Ascending aorta (tissue), 2 donors: ENCODE measurements at regions of chr6 and their contacts with region 1.

Region 1: GRCh38 chr6:125301435-125302391 is at the start of gene HDDC2:
- DNase-seq: peak in 1 of 2 donors; percentile 84
- H3K4me3 ChIP-seq: peak within 1 kb of the TSS; percentile 76 to 79
- H3K27ac ChIP-seq: peak within 1 kb of the TSS; percentile 94 to 96
- H3K4me1 ChIP-seq: peaks cover 3 to 5% of the 10 kb centered on the region in 2 donors
- H3K27me3 ChIP-seq: no peaks in the 10 kb centered on the region
- CTCF ChIP-seq: no peak
- total RNA-seq, gene HDDC2: 2.4 TPM

Region 2: DNA sequence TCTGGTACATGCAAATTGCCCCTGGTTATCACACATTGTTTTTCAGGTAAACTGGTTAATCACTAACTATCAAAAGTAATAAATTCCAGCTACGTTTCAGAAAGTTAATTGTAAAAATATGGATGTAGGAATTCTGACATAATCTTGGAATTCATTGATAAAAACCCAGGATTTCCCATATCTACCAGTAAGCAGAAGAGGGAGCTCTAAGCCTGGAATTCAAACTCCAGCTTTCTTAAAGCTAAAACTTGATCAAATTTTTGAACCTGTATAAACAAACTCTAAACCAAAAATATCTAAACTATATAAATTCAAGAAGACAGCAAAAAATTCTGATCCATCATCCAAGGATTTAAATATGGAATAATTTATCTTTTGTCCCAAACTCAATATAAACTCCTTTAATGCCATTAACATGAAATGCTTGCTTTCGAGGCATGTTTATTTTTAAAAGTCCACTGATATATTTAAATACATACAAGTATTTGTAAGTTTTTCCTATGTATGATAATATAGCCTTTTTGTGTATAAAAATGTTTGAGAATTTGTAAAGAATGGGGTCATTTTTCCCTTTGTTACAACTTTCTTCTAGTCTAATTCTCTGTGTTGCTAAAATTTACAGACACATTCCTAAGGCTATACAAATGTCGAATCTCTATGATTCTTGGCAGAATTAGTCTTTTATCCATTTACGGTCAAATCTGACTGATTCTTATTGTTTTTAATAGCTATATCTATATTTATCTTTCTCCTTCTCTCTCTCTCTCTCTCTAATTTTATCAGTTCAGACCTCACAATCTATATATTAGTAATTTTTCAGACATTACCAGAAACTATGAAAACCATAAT is 430.9 kb before region 1 on chr6:
- intact Hi-C with region 1: loop called (anchors 10 kb)
- DNase-seq: no peak
- H3K4me3 ChIP-seq: peak overlapping the region in 1 of 2 donors; percentile 7
- H3K27ac ChIP-seq: no peak overlapping the region
- H3K4me1 ChIP-seq: no peaks in the 10 kb centered on the region
- H3K27me3 ChIP-seq: no peaks in the 10 kb centered on the region
- CTCF ChIP-seq: peak; percentile 58 to 83 (median 64)

Region 3: GRCh38 chr6:124961777-124962611 is 339.7 kb before region 1 on chr6 and contains the start of gene RNF217:
- intact Hi-C with region 1: loop called (anchors 5 kb)
- DNase-seq: peak in 1 of 2 donors; percentile 84
- H3K4me3 ChIP-seq: peak within 1 kb of the TSS; percentile 87 to 90
- H3K27ac ChIP-seq: peak within 1 kb of the TSS; percentile 93 to 98
- H3K4me1 ChIP-seq: peaks cover 0 to 24% of the 10 kb centered on the region in 2 donors
- H3K27me3 ChIP-seq: no peaks in the 10 kb centered on the region
- CTCF ChIP-seq: peak in 1 of 3 experiments; percentile 15
- total RNA-seq, gene RNF217: 7.3 TPM

Region 4: DNA sequence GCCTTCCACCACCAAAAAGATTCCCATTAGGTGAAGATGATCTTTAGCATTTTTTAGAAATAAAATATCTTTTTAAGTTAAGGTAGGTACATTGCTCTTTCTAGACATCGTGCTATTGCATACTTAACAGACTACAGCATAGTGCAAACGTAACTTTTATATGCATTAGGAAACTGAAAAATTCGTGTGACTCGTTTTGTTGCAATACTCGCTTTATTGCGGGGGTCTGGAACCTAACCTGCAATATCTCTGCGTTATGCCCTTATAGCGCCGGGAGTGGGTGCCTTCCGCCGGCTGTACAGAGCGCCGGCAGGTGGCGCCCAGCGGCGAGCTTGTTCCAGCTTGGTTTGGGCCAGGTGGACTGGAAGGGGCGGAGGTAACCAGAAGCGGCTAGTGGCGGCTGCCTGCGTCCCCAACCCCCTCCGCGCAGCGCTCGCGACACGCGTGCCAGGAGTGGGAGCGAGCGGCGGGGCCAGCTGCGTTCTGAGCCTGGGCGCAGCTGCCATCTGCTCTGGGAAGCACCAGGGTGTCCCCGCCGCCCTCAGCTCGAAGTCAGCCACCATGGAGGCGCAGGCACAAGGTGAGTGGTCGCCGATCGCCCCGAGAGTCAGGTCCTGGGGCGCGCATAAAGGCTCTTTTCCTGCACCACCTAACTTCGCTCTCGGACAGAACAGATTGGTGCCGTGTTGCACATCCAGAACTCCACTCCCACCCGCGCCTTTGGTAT is 148.2 kb before region 1 on chr6 and contains the start of gene TPD52L1:
- intact Hi-C with region 1: loop called (anchors 2 kb)
- DNase-seq: peak; percentile 48 to 89
- H3K4me3 ChIP-seq: peak within 1 kb of the TSS; percentile 74 to 89
- H3K27ac ChIP-seq: peak within 1 kb of the TSS; percentile 81 to 82
- H3K4me1 ChIP-seq: peaks cover 0 to 14% of the 10 kb centered on the region in 2 donors
- H3K27me3 ChIP-seq: no peaks in the 10 kb centered on the region
- CTCF ChIP-seq: peak; percentile 78 to 88 (median 80)
- total RNA-seq, gene TPD52L1: 93.6 TPM

Region 5: GRCh38 chr6:125191916-125192609 is 109.7 kb before region 1 on chr6:
- intact Hi-C with region 1: loop called (anchors 2 kb)
- DNase-seq: peak; percentile 10 to 77
- H3K4me3 ChIP-seq: no peak overlapping the region
- H3K27ac ChIP-seq: no peak overlapping the region
- H3K4me1 ChIP-seq: peaks cover 10 to 30% of the 10 kb centered on the region in 2 donors
- H3K27me3 ChIP-seq: no peaks in the 10 kb centered on the region
- CTCF ChIP-seq: peak; percentile 49 to 71 (median 65)

Region 6: DNA sequence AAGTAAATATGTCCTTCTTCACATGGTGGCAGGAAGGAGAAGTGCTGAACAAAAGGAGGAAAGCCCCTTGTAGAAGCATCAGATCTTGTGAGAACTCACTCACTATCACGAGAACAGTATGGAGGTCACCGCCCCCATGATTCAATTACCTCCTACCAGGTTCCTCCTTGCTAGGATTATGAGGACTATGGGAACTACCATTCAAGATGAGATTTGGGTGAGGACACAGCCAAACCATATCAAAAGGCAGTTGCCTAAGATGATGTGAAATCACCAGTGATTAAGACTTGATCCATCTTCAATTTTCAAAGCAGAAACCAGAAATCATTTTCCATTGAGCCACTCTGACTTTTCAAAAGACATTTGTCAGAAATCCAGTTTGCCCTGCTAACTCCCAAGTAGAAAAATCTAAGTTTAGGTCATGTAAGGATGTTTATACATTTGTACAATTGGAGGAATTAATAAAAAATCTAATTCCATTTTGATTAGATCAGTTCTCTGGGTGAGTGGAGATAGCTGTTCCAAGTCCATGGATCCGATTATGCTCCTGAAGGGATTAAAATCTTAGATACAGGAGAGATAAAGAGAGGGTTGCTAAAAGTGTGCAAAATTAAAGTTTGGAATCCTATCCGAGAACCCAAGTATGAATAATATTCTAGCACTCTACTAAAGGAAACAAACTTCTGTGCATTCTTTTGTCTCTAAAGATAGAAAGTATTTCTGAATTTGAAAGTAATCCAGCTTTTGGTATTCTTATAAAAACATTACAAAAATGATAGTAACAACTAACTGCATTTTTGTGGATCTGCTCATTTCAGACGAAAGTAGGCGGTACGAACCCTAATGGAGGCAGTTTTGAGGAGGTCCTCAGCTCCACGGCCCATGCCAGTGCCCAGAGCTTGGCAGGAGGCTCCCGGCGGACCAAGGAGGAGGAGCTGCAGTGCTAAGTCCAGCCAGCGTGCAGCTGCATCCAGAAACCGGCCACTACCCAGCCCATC is 39.4 kb before region 1 on chr6:
- intact Hi-C with region 1: loop called (anchors 1 kb)
- DNase-seq: peak in 1 of 2 donors; percentile 86
- H3K4me3 ChIP-seq: peak overlapping the region in 1 of 2 donors; percentile 16
- H3K27ac ChIP-seq: peak overlapping the region; percentile 66 to 71
- H3K4me1 ChIP-seq: peaks cover 0 to 13% of the 10 kb centered on the region in 2 donors
- H3K27me3 ChIP-seq: no peaks in the 10 kb centered on the region
- CTCF ChIP-seq: no peak

Region 7: GRCh38 chr6:125779924-125780539 is 478.3 kb after region 1 on chr6:
- intact Hi-C with region 1: no loop called
- DNase-seq: peak; percentile 47 to 94
- H3K4me3 ChIP-seq: peak overlapping the region; percentile 56 to 85
- H3K27ac ChIP-seq: peak overlapping the region; percentile 90 to 98
- H3K4me1 ChIP-seq: peaks cover 0 to 6% of the 10 kb centered on the region in 2 donors
- H3K27me3 ChIP-seq: no peaks in the 10 kb centered on the region
- CTCF ChIP-seq: peak in 2 of 3 experiments; percentile 31 to 53